A549 (cell line): ENCODE measurements at regions of chr21 and their contacts with region 1.

Region 1: GRCh38 chr21:35940074-35940927 is 120.0 kb downstream of the SETD4 start:
- DNase-seq: peak; percentile 24 to 61
- ATAC-seq: peak; percentile 91 to 97
- H3K4me3 ChIP-seq: no peak overlapping the region
- H3K27ac ChIP-seq: no peak overlapping the region
- H3K4me1 ChIP-seq: no peaks in the 10 kb centered on the region
- CTCF ChIP-seq: peak; percentile 59
- EP300 ChIP-seq: no peak
- POLR2A ChIP-seq: no peak
- RAD21 ChIP-seq: peak; percentile 72

Region 2: GRCh38 chr21:35779690-35780570 is 160.4 kb before region 1 on chr21:
- CTCF ChIA-PET with region 1: no interaction called
- POLR2A ChIA-PET with region 1: no interaction called
- DNase-seq: no peak
- ATAC-seq: no peak
- H3K4me3 ChIP-seq: no peak overlapping the region
- H3K27ac ChIP-seq: no peak overlapping the region
- H3K4me1 ChIP-seq: no peaks in the 10 kb centered on the region
- CTCF ChIP-seq: no peak
- EP300 ChIP-seq: no peak
- POLR2A ChIP-seq: no peak
- RAD21 ChIP-seq: no peak

Region 3: GRCh38 chr21:35927262-35927661 is 13.0 kb before region 1 on chr21:
- CTCF ChIA-PET with region 1: interaction called, 13 read pairs
- POLR2A ChIA-PET with region 1: no interaction called
- DNase-seq: no peak
- ATAC-seq: no peak
- H3K4me3 ChIP-seq: no peak overlapping the region
- H3K27ac ChIP-seq: no peak overlapping the region
- H3K4me1 ChIP-seq: no peaks in the 10 kb centered on the region
- CTCF ChIP-seq: no peak
- EP300 ChIP-seq: no peak
- POLR2A ChIP-seq: no peak
- RAD21 ChIP-seq: no peak